ENCODE measurements at regions of chr15 and their contacts with region 1.

Region 1: DNA sequence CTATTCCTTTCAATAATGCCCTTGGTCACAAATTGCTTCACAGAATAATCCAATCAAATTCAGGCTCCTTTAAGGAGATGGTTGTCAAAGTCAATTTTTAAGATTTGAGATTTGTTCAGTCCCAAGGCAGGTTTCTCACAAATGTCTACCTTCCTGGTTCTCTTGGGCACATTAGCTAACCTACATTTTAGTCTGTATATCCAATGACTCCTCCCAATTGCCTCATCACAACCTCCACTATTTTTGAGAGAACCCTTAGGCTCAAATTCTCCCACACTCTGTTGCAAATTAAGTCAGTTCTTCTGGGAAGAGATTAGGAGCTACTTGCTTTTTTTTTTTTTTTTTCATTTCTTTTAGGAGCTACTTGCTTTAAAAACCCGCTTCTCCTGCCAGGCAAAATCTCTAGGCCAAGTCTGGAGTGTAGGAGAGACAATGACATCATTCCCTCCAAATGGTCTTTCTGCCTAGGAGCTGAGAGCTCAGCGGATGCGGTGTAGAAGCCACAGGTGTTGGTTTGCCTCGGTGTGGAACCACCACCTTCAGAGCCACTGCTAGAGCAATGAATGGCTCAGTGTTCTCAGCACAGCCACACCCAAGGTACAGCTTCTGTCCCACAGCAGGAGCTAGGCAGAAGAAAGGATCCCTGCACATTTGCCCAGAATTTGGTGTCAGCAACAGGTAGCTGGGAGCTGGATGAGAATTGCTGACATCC is 10.0 kb upstream of the INO80 start:
- DNase-seq: no peak
- ATAC-seq: no peak
- H3K4me3 ChIP-seq: no peak overlapping the region
- H3K27ac ChIP-seq: no peak overlapping the region
- H3K4me1 ChIP-seq: no peaks in the 10 kb centered on the region
- H3K27me3 ChIP-seq: peaks cover 0 to 29% (median 0%) of the 10 kb centered on the region in 3 donors
- CTCF ChIP-seq: no peak

Region 2: DNA sequence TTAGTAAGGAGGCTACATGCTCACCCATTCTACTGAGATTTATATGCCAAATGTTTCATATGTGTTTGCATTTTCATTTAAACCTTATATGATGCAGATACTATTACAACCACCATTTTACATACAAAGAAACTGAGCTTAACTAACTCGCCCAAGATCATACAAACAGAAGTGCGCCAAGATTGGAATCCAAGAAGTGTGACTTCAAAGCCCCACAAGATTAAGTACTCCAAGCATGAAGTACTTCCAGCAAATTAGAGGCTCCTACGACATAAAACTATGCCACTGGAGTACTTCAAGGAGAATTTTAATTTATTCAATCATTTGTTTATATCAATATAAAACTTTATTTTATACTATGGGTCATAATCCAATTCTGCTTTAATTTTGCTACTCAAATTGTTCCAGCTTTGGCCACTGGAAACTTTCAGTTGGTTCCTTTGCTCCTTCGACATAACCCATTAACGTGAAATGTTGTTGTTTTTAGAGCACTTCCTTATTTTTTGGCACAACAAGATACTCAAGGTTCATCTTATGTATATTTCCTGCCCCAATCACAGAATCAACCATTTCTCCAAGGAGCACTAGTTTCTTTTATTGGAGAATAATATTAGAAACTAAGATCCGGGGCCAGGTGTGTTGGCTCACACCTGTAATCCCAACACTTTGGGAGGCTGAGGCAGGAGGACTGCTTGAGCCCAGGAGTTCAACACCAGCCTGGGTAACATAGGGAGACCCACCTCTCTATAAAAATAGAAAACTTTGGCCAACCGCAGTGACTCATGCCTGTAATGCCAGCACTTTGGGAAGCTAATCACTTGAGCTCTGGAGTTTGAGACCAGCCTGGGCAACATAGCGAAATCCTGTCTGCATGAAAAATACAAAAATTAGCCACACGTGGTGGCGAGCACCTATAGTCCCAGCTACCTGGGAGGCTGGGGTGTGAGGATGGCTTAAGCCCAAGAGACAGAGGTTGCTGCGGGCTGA is 20.4 kb before region 1 on chr15:
- intact Hi-C with region 1: loop called in 1 of 2 experiments (anchors 2 kb)
- DNase-seq: no peak
- ATAC-seq: no peak
- H3K4me3 ChIP-seq: no peak overlapping the region
- H3K27ac ChIP-seq: no peak overlapping the region
- H3K4me1 ChIP-seq: peaks cover 18% of the 10 kb centered on the region
- H3K27me3 ChIP-seq: no peaks in the 10 kb centered on the region
- CTCF ChIP-seq: no peak

Region 3: DNA sequence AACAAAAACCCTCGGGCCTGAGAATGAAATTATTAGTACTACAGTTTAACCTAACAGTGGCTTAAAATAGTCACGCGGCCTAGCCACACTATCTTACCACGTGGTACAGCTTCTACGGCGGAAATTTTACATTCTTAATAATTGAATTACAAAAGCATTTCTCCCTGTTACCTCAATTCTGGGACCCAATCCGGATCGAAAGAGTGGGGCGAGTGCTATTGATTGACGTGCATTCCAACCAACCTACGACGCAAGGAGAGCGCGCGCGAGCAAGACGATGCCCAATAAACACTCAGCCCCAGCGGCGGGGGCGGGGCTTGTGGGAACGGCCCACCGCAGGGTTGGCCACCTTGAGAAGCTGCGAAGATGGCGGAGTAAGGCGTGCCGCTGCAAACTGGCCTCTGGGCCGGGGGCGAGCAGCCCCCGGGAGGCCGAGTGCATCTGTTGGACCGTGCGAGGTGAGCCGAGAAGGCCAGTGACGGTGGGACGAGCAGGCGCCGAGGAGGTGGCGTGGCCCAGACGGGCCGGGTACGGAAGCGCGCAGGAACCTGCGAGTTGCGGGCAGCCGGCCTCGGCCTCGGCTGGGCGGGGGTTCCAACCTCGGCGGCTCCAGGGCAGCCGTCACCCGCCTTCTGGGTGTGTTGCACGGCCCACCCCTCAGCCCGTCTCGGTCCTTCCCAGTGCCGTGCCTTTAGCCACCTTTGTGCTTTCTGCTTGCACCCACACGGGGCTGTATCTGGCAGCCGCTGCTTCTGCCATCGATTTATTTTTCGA is 157.8 kb after region 1 on chr15:
- intact Hi-C with region 1: no loop called
- DNase-seq: peak; percentile 98
- ATAC-seq: peak; percentile 99 to 100 (median 99)
- H3K4me3 ChIP-seq: peak overlapping the region; percentile 100
- H3K27ac ChIP-seq: peak overlapping the region; percentile 95
- H3K4me1 ChIP-seq: peaks cover 26% of the 10 kb centered on the region
- H3K27me3 ChIP-seq: no peaks in the 10 kb centered on the region
- CTCF ChIP-seq: no peak